ENCODE measurements at regions of chr15 and their contacts with region 1.

Region 1: DNA sequence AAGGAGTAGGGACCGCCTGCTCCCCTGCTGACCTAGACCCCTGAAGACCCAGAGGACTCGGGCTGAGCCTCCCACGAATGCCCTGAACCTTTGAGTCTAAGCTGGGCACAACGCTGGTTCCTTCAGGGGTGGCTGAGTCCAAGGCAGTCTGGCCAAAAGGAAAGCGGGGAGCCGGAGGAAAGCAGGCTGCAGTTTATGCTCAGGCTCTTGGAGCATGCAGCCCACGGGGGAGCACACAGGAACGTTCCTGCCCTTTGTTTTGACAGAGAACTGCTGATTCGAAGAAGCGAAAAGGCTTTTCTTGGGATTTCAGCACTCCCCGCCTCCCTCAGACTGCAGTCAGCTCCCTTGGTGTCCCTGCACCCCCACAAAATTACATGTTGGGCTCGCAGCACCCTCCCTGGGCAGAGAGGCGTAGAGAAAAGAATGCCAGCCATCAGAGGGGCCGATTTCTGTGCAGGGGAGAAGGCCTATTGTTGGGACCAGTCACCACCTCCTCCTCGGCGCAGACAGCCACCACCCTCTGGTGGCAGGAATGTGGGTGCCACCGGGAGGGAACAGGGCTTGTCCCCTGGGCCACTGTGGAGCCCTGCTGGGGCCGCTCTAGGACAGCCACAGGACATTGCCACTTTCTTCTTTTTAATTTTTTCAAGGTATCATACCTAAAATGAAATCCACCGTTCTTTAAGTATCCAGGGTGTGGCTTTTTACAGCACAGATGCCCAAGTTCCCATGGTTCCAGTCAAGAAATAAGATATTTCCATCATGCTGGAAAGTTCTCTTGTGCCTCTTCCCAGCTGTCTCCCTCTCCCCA is 72.2 kb downstream of the SMAD6 start:
- DNase-seq: peak; percentile 80
- H3K4me3 Mint-ChIP-seq: no peak overlapping the region
- H3K27ac Mint-ChIP-seq: no peak overlapping the region
- H3K4me1 Mint-ChIP-seq: no peaks in the 10 kb centered on the region
- H3K27me3 Mint-ChIP-seq: no peaks in the 10 kb centered on the region
- CTCF ChIP-seq: peak; percentile 94

Region 2: GRCh38 chr15:66603301-66604179 is 170.7 kb before region 1 on chr15:
- CTCF ChIA-PET with region 1: interaction called, 5 read pairs
- POLR2A ChIA-PET with region 1: no interaction called
- intact Hi-C with region 1: loop called (anchors 5 kb)
- DNase-seq: peak; percentile 57
- H3K4me3 Mint-ChIP-seq: no peak overlapping the region
- H3K27ac Mint-ChIP-seq: no peak overlapping the region
- H3K4me1 Mint-ChIP-seq: no peaks in the 10 kb centered on the region
- H3K27me3 Mint-ChIP-seq: no peaks in the 10 kb centered on the region
- CTCF ChIP-seq: peak; percentile 78

Region 3: DNA sequence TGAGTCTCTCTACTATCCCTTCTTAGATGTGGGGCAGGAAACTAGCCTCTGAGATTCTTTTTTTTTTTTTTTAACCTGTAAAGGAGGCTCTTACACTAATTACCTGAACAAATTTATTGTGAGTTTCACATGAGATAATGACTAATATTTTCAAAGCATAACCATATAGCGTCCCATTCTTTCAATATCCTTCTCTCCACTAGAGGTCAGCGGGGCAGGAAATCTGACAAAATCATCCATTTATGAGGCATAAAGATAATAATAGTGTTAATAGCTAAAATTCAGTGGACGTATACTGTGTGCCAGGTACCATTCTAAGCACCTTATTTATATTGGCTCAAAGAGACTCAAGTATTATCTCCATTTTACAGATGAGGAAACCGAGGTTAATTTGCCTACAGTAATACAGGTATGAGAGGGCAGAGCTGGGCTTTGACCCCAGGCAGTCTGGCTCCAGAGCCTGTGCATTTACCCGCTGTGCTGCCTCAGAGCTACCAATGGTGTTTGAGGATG is 88.5 kb before region 1 on chr15:
- CTCF ChIA-PET with region 1: interaction called, 8 read pairs
- POLR2A ChIA-PET with region 1: no interaction called
- intact Hi-C with region 1: loop called (anchors 1 kb)
- DNase-seq: no peak
- H3K4me3 Mint-ChIP-seq: no peak overlapping the region
- H3K27ac Mint-ChIP-seq: no peak overlapping the region
- H3K4me1 Mint-ChIP-seq: no peaks in the 10 kb centered on the region
- H3K27me3 Mint-ChIP-seq: no peaks in the 10 kb centered on the region
- CTCF ChIP-seq: peak; percentile 38

Region 4: DNA sequence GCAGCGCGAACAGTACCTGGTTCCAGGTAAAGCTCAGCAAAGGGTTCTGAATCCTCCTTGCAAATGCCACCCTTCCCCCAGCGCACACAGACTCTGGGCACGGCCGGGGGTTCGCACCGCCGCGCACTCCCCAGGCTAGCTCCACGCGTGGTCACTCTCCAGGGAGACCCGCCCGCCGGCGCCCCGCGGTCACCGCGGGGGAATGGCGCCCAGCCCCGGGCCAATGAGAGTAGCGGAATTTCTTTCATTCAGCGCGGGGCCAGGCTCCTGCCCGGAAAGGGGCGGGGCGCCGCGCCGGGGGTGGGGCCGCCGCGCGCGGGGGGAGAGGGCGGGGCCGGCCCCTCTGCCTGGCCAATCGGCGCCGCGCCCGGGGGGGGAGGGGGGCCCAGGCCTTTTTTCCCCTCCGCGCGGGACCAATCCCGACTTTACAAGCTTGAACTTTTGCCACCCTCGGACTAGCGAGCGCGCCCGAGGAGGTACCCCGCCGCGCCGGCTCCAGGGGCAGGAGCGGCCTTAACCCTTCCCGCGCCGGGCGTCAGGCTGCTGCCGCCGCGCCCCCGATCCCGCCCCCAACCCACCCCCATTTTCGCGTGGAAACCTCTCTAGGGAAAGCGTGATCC is 73.3 kb before region 1 on chr15:
- CTCF ChIA-PET with region 1: no interaction called
- POLR2A ChIA-PET with region 1: no interaction called
- intact Hi-C with region 1: loop called (anchors 1 kb)
- DNase-seq: peak; percentile 95
- H3K4me3 Mint-ChIP-seq: peak overlapping the region; percentile 79
- H3K27ac Mint-ChIP-seq: no peak overlapping the region
- H3K4me1 Mint-ChIP-seq: peaks cover 12% of the 10 kb centered on the region
- H3K27me3 Mint-ChIP-seq: peaks cover 18% of the 10 kb centered on the region
- CTCF ChIP-seq: no peak

Region 5: DNA sequence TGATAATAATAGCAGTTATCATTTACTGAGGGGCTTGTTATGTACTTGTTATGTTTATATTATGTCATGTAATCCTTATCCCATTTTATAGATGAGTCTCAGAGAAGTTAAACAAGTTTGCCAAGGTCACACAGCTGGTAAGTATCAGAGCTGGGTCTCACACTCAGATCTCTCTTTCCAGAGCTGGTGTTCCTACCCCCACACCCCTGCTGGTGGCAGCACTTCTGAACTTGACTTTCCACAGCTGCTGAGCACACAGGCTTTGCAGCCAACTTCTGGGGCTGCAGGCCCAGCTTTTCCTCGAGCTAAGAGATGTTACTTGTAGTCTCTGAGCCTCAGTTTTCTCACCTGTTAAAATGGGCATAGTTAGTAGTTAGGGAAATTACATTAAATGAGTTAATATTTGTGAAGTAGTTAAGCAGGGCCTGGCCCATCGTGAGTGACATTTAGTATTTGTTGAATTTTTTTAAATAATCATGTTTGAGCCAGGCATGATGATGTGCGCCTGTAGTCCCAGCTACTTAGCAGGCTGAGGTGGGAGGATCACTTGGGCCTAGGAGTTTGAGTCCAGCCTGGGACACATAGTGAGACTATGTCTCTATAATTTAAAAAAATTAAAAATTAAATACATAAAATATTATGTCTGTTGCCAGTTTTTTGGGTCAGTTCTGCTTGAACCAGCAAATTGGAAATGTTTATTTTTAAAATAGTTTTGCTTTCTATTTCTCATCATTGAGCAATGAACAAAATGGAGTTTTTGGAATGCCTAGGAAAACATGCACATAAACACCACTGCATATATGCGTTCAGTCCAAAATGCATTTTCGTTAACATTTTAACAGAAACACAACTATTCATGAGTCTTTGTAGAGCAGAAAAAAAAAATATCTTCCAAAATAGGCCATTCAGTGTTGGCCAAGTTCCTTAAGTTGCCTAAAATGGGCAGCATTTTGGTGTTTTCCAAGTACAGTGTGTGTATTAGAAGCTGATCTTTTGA is 15.1 kb after region 1 on chr15:
- CTCF ChIA-PET with region 1: interaction called, 14 read pairs
- POLR2A ChIA-PET with region 1: no interaction called
- intact Hi-C with region 1: no loop called
- DNase-seq: peak; percentile 45
- H3K4me3 Mint-ChIP-seq: no peak overlapping the region
- H3K27ac Mint-ChIP-seq: no peak overlapping the region
- H3K4me1 Mint-ChIP-seq: no peaks in the 10 kb centered on the region
- H3K27me3 Mint-ChIP-seq: no peaks in the 10 kb centered on the region
- CTCF ChIP-seq: peak; percentile 44

Region 6: GRCh38 chr15:67212684-67213367 is 438.6 kb after region 1 on chr15:
- CTCF ChIA-PET with region 1: no interaction called
- POLR2A ChIA-PET with region 1: no interaction called
- intact Hi-C with region 1: no loop called
- DNase-seq: no peak
- H3K4me3 Mint-ChIP-seq: no peak overlapping the region
- H3K27ac Mint-ChIP-seq: no peak overlapping the region
- H3K4me1 Mint-ChIP-seq: peaks cover 12% of the 10 kb centered on the region
- H3K27me3 Mint-ChIP-seq: no peaks in the 10 kb centered on the region
- CTCF ChIP-seq: no peak

Measured in MCF 10A (cell line).